T-cell (primary cell): ENCODE measurements at regions of chrX and their contacts with region 1.

Region 1: DNA sequence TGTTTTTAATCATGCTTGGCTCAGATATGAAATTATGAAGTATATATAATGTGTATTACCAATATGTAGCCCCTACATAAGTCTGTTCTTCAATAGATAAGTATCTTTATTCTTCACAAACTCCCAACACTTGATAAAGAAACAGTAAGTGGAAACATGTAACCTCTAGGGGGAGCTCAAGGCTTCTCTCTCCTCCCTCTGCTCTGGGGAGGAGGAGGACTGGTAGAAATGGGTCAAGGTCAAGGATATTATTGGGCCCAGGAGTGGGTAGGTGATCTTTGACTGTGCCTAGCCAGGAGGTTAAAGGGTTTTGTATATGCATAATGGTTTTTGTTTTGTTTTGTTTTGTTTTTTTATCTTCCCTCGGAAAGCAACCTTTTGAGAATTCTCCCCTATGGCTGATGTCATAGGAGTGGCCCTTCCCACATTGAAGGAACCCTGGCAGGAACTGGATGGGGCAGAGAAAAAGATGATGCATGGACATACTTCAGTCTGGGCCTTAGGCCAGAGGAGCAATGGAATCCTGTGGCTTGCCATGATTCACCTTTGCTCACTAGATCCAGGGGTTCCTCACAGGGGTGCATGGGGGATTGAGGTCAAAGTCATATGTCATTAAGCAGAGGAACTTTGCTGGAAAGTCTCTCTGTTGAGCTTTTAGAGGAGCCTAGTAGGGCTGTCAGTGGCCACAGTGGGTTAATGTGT is 460.3 kb downstream of the MID1IP1 start:
- DNase-seq: peak in 11 of 35 experiments; percentile 1 to 66 (median 4)
- ATAC-seq: peak in 1 of 4 experiments; percentile 60
- H3K4me3 ChIP-seq: no peak overlapping the region
- H3K4me3 Mint-ChIP-seq: no peak overlapping the region
- H3K27ac ChIP-seq: no peak overlapping the region
- H3K27ac Mint-ChIP-seq: no peak overlapping the region
- H3K4me1 ChIP-seq: peaks cover 0 to 3% of the 10 kb centered on the region in 2 experiments
- H3K4me1 Mint-ChIP-seq: peaks cover 0 to 22% (median 8%) of the 10 kb centered on the region in 3 donors
- H3K27me3 ChIP-seq: no peaks in the 10 kb centered on the region
- H3K27me3 Mint-ChIP-seq: no peaks in the 10 kb centered on the region

Region 2: GRCh38 chrX:39211526-39211925 is 50.1 kb before region 1 on chrX:
- CTCF ChIA-PET with region 1: no interaction called
- POLR2A ChIA-PET with region 1: interaction called in 1 of 2 experiments, 12 read pairs
- DNase-seq: no peak
- ATAC-seq: no peak
- H3K4me3 ChIP-seq: no peak overlapping the region
- H3K4me3 Mint-ChIP-seq: no peak overlapping the region
- H3K27ac ChIP-seq: no peak overlapping the region
- H3K27ac Mint-ChIP-seq: no peak overlapping the region
- H3K4me1 ChIP-seq: no peaks in the 10 kb centered on the region
- H3K4me1 Mint-ChIP-seq: no peaks in the 10 kb centered on the region
- H3K27me3 ChIP-seq: no peaks in the 10 kb centered on the region
- H3K27me3 Mint-ChIP-seq: peaks cover 0 to 20% of the 10 kb centered on the region in 2 donors

Region 3: GRCh38 chrX:39242187-39242586 is 19.4 kb before region 1 on chrX:
- CTCF ChIA-PET with region 1: no interaction called
- POLR2A ChIA-PET with region 1: no interaction called
- DNase-seq: peak in 5 of 35 experiments; percentile 1 to 54 (median 9)
- ATAC-seq: peak in 1 of 4 experiments; percentile 23
- H3K4me3 ChIP-seq: no peak overlapping the region
- H3K4me3 Mint-ChIP-seq: no peak overlapping the region
- H3K27ac ChIP-seq: no peak overlapping the region
- H3K27ac Mint-ChIP-seq: no peak overlapping the region
- H3K4me1 ChIP-seq: no peaks in the 10 kb centered on the region
- H3K4me1 Mint-ChIP-seq: peaks cover 0 to 2% (median 0%) of the 10 kb centered on the region in 3 donors
- H3K27me3 ChIP-seq: no peaks in the 10 kb centered on the region
- H3K27me3 Mint-ChIP-seq: peaks cover 0 to 8% of the 10 kb centered on the region in 2 donors

Region 4: DNA sequence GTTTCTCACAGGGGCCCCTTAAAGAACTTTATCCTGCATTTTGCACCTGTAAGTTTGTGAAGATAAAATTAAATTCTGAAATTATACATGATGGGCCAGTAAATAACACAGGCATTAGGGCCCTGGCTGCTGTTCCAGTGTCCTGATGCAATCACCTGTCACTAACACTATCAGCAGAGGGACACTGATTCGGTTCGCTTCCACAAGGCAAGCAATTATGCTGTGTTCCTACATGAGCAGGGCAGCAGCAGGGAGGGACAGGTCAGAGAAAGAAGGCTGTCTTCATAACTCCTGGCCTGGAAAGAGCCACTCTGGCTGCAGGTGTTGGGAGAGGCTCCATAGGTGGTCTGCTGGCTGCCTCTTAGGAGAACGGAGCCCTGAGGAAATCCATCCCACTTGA is 27.0 kb after region 1 on chrX:
- CTCF ChIA-PET with region 1: no interaction called
- POLR2A ChIA-PET with region 1: no interaction called
- DNase-seq: no peak
- ATAC-seq: no peak
- H3K4me3 ChIP-seq: no peak overlapping the region
- H3K4me3 Mint-ChIP-seq: no peak overlapping the region
- H3K27ac ChIP-seq: no peak overlapping the region
- H3K27ac Mint-ChIP-seq: no peak overlapping the region
- H3K4me1 ChIP-seq: no peaks in the 10 kb centered on the region
- H3K4me1 Mint-ChIP-seq: peaks cover 0 to 6% (median 0%) of the 10 kb centered on the region in 3 donors
- H3K27me3 ChIP-seq: no peaks in the 10 kb centered on the region
- H3K27me3 Mint-ChIP-seq: peaks cover 0 to 4% of the 10 kb centered on the region in 2 donors

Region 5: DNA sequence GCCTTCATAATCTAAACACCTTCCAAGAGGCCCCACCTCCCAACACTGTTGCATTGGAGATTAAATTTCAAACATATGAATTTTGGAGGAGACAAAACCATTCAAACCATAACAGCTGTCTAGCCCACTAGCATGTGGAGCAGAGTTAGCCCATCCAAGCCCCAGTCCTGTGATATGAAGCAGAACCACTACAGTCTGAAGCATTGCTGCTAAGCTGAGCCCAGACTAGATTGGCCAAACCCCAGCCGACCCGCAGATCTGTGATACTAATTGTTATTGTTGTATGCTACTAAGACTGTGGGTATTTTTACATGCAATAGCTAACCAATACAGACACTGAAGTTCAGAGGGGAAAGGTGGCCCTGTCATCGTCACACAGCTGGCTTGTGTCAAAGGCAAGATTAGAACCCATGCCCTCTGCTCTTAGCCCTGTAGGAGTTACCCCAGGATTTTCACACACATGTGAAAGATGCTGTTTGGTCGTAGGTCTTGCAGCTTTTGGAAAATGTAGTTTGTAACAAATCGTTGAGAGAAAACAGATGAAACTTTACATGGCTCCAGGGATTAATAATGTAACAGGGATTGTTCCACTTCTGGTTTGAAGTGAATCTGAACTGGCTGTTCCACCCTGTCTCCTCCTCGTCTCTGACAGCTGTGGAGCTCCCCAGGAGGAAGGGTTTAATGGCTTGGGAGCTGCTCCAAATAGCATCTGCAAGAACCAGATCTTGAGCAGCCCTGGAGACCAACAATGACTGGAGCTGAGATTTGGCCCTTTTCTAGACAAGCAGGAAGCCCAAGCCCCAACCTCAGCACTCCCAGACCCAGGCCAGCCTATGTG is 57.1 kb after region 1 on chrX:
- CTCF ChIA-PET with region 1: no interaction called
- POLR2A ChIA-PET with region 1: interaction called in 1 of 2 experiments, 13 read pairs
- DNase-seq: no peak
- ATAC-seq: no peak
- H3K4me3 ChIP-seq: no peak overlapping the region
- H3K4me3 Mint-ChIP-seq: no peak overlapping the region
- H3K27ac ChIP-seq: no peak overlapping the region
- H3K27ac Mint-ChIP-seq: peak overlapping the region; percentile 0 to 16
- H3K4me1 ChIP-seq: peaks cover 0 to 8% of the 10 kb centered on the region in 2 experiments
- H3K4me1 Mint-ChIP-seq: peaks cover 30 to 47% (median 32%) of the 10 kb centered on the region in 3 donors
- H3K27me3 ChIP-seq: no peaks in the 10 kb centered on the region
- H3K27me3 Mint-ChIP-seq: peaks cover 0 to 2% of the 10 kb centered on the region in 2 donors

Region 6: DNA sequence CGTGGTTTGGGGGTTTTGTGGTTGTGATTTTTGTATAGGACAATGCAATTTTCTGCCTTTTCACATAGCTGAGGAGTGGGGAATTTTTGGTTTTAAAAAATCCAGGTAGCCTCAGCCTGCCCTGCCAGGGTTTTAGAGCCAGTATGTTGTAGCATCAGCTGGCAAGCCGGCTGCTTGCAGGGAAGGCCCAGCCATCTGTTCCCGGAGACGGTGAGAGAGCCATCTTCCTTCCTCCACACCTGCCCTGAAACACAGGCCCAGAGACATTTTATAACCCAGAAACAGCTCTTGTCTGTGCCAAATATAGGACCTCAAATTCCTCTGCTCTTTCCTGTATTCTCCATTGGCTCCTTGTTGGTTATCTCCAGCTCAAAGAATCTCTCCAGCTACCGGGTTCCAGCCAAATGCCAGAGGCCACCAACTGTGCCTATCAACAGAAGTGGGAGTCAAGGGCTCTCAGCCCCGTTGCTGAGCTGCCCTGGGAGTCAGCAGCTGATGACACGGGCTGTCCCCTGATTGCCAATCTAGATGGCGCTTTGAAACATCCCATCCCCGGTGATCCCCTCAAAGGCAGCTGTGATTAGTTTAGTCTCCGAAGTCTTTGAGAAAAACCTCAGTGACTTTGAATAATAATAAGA is 134.9 kb after region 1 on chrX:
- CTCF ChIA-PET with region 1: no interaction called
- POLR2A ChIA-PET with region 1: no interaction called
- DNase-seq: no peak
- ATAC-seq: no peak
- H3K4me3 ChIP-seq: no peak overlapping the region
- H3K4me3 Mint-ChIP-seq: no peak overlapping the region
- H3K27ac ChIP-seq: no peak overlapping the region
- H3K27ac Mint-ChIP-seq: no peak overlapping the region
- H3K4me1 ChIP-seq: no peaks in the 10 kb centered on the region
- H3K4me1 Mint-ChIP-seq: peaks cover 0 to 4% (median 0%) of the 10 kb centered on the region in 3 donors
- H3K27me3 ChIP-seq: no peaks in the 10 kb centered on the region
- H3K27me3 Mint-ChIP-seq: peaks cover 0 to 6% of the 10 kb centered on the region in 2 donors